ENCODE measurements at regions of chr5 and their contacts with region 1.

Region 1: GRCh38 chr5:79514391-79515105 is 614 bp upstream of the HOMER1 start:
- DNase-seq: peak; percentile 78
- ATAC-seq: peak; percentile 80
- H3K4me3 ChIP-seq: peak overlapping the region; percentile 71
- H3K27ac ChIP-seq: peak overlapping the region; percentile 58; the same call in 1 of the 2 replicates
- H3K4me1 ChIP-seq: no peaks in the 10 kb centered on the region; the same call in 1 of the 2 replicates
- H3K27me3 ChIP-seq: peaks cover 0 to 2% of the 10 kb centered on the region in 2 experiments; a peak in 2 of 4 replicates
- CTCF ChIP-seq: no peak
- EP300 ChIP-seq: peak; percentile 13 to 59; a peak in 2 of 4 replicates
- POLR2A ChIP-seq: peak; percentile 97
- RAD21 ChIP-seq: no peak

Region 2: DNA sequence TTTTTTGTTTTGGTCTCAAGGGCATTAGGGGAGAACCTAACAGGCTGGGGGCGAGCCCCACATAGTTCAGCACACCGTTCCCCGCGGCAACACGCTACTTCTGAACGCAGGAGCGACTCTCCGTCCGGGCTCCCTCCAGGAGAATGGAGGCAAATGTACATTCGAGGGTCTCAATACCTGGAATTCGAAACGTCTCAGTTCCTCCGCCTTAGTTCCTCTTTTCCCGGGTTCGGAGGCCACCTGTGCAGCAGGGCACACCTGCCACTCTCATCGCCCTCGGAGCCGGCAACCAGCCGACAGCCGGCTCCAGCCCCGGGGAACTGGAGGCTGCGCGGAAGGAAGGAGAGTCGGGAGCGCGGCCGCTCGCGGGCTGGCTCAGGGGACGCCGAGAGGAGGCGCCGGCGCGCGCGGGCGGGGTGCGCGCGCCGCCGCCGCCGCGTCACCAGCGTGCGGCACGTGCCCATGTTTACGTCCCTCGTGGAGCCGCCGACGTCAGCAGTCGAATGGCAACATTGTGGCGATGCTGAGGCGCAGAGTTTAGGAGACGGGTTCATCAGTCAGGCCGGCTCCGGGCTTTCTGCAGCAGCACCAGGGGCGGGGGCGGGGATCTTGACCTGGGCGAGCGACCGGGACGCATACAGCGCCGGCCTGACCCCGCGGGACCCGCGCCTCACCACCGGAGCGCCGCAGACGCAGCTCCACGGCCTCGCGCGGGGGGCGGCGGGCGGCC is 278.7 kb before region 1 on chr5 and contains the start of gene JMY:
- CTCF ChIA-PET with region 1: interaction called, 3 read pairs
- POLR2A ChIA-PET with region 1: no interaction called
- RAD21 ChIA-PET with region 1: no interaction called
- SMC1A ChIA-PET with region 1: interaction called, 3 read pairs
- in situ Hi-C with region 1: no loop called
- intact Hi-C with region 1: loop called (anchors 5 kb)
- DNase-seq: no peak
- ATAC-seq: peak; percentile 69
- H3K4me3 ChIP-seq: peak within 1 kb of the TSS; percentile 90
- H3K27ac ChIP-seq: peak within 1 kb of the TSS; percentile 89
- H3K4me1 ChIP-seq: peaks cover 5% of the 10 kb centered on the region
- H3K27me3 ChIP-seq: no peaks in the 10 kb centered on the region
- CTCF ChIP-seq: peak in 1 of 3 experiments; percentile 11; a peak in 2 of 6 replicates
- EP300 ChIP-seq: no peak
- POLR2A ChIP-seq: peak; percentile 90
- RAD21 ChIP-seq: no peak
- polyA plus RNA-seq, gene JMY: 0.63 to 0.80 TPM

Region 3: DNA sequence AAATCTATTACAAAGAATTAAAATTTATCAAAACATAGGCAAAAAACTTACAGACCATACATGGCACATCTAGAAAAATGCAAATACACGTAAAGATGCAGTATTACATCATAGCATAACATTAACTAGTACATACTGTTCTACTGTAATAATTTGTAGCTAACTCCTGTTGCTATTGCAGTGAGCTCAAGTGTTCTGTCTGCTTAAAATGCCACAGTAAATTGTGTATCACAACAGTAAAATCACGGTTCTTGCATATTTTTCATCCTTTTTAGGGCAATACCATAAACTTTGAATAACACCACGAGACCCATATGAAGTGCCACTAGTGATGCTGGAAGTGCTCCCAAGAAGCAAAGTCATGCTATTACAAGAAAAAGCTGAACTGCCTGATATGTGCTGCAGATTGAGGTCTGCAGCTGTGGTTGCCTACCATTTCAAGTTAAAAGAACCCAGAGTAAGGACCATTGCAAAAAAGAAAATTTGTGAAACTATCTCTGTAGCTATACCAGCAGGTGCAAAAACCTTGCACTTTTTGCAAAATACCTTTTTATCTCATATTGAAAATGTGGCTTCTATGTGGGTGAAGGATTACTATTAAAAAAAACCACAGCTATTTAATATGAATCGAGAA is 14.8 kb before region 1 on chr5:
- CTCF ChIA-PET with region 1: interaction called, 7 read pairs
- POLR2A ChIA-PET with region 1: interaction called, 5 read pairs
- RAD21 ChIA-PET with region 1: no interaction called
- SMC1A ChIA-PET with region 1: interaction called, 27 read pairs
- in situ Hi-C with region 1: no loop called
- intact Hi-C with region 1: no loop called
- DNase-seq: no peak
- ATAC-seq: no peak
- H3K4me3 ChIP-seq: no peak overlapping the region
- H3K27ac ChIP-seq: no peak overlapping the region
- H3K4me1 ChIP-seq: no peaks in the 10 kb centered on the region
- H3K27me3 ChIP-seq: no peaks in the 10 kb centered on the region
- CTCF ChIP-seq: no peak
- EP300 ChIP-seq: no peak
- POLR2A ChIP-seq: no peak
- RAD21 ChIP-seq: no peak

Region 4: DNA sequence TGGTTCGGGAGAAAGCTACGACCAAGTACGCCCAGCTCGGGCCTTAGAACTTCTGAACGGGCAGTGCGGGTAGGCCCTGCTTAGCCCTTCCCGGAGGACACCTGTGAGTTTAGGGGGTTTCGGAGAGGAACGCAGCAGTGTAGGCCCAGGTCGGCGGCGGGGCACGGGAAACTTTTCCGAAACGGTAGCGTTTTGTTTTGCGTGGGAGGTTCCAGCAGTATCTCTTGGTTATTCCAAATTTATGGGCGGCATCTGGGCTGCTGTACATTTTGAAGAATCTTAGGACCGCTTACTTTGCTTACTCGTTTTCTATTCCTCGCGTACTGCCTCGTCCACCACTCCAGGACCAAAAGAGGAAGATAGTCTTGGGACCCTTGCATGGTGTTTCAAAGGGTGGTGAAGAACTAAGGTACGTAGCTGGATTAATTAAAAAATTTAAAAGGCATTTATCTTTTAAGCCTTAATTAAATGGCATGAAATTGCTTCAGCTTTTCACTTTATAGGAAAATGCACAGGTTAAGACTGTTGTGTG is 98.2 kb after region 1 on chr5:
- CTCF ChIA-PET with region 1: no interaction called
- POLR2A ChIA-PET with region 1: interaction called, 4 read pairs
- RAD21 ChIA-PET with region 1: interaction called, 3 read pairs
- SMC1A ChIA-PET with region 1: no interaction called
- in situ Hi-C with region 1: no loop called
- intact Hi-C with region 1: loop called (anchors 5 kb)
- DNase-seq: no peak
- ATAC-seq: peak; percentile 49
- H3K4me3 ChIP-seq: peak overlapping the region; percentile 99
- H3K27ac ChIP-seq: peak overlapping the region; percentile 87
- H3K4me1 ChIP-seq: no peaks in the 10 kb centered on the region
- H3K27me3 ChIP-seq: no peaks in the 10 kb centered on the region
- CTCF ChIP-seq: no peak
- EP300 ChIP-seq: no peak
- POLR2A ChIP-seq: no peak
- RAD21 ChIP-seq: no peak